K562 (cell line): ENCODE measurements at regions of chr3 and their contacts with region 1.

Region 1: GRCh38 chr3:155854141-155854940 is at the start of gene SLC33A1:
- DNase-seq: peak; percentile 97 to 100 (median 98)
- ATAC-seq: peak; percentile 93
- H3K4me3 ChIP-seq: peak within 1 kb of the TSS; percentile 93
- H3K27ac ChIP-seq: peak within 1 kb of the TSS; percentile 98
- H3K4me1 ChIP-seq: peaks cover 3 to 15% of the 10 kb centered on the region in 2 experiments; a peak in 3 of 5 replicates
- H3K27me3 ChIP-seq: no peaks in the 10 kb centered on the region
- CTCF ChIP-seq: peak in 2 of 3 experiments; percentile 2 to 4; a peak in 1 of 6 replicates
- EP300 ChIP-seq: peak; percentile 61
- POLR2A ChIP-seq: peak; percentile 95
- RAD21 ChIP-seq: no peak
- polyA plus RNA-seq, gene SLC33A1: 6.2 to 7.8 TPM

Region 2: GRCh38 chr3:154862265-154862664 is 992.1 kb before region 1 on chr3:
- CTCF ChIA-PET with region 1: no interaction called
- POLR2A ChIA-PET with region 1: no interaction called
- in situ Hi-C with region 1: no loop called
- intact Hi-C with region 1: no loop called
- DNase-seq: no peak
- ATAC-seq: no peak
- H3K4me3 ChIP-seq: no peak overlapping the region
- H3K27ac ChIP-seq: no peak overlapping the region
- H3K4me1 ChIP-seq: no peaks in the 10 kb centered on the region
- H3K27me3 ChIP-seq: no peaks in the 10 kb centered on the region
- CTCF ChIP-seq: no peak
- EP300 ChIP-seq: no peak
- POLR2A ChIP-seq: no peak
- RAD21 ChIP-seq: no peak

Region 3: GRCh38 chr3:155382396-155383042 is 471.8 kb before region 1 on chr3:
- CTCF ChIA-PET with region 1: no interaction called
- POLR2A ChIA-PET with region 1: no interaction called
- in situ Hi-C with region 1: no loop called
- intact Hi-C with region 1: loop called (anchors 10 kb)
- DNase-seq: peak; percentile 64 to 85 (median 70)
- ATAC-seq: peak; percentile 99
- H3K4me3 ChIP-seq: no peak overlapping the region
- H3K27ac ChIP-seq: no peak overlapping the region
- H3K4me1 ChIP-seq: no peaks in the 10 kb centered on the region
- H3K27me3 ChIP-seq: peaks cover under 1 to 7% of the 10 kb centered on the region in 2 experiments; a peak in 3 of 5 replicates
- CTCF ChIP-seq: peak; percentile 79 to 89 (median 83)
- EP300 ChIP-seq: no peak
- POLR2A ChIP-seq: no peak
- RAD21 ChIP-seq: peak; percentile 94 to 95

Region 4: DNA sequence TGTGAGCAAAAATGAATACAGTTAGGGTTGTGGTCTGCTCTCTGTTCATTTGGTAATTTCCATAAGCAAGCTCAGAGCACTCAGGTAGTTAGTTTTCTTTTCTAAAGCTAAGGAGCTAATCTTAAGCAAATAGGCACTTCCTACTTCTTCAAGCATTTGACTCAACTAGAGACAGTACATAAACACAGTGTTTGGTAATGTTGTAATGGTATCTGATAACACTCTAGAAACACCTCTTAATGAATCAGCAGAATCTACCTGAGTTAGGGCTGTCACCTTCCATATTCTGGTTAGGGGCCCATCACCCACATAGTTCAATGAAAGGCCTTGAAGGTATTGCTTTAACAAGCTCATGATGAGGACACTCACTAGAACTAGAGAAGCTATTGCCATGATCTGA is 192.6 kb before region 1 on chr3:
- CTCF ChIA-PET with region 1: no interaction called
- POLR2A ChIA-PET with region 1: no interaction called
- in situ Hi-C with region 1: no loop called
- intact Hi-C with region 1: no loop called
- DNase-seq: no peak
- ATAC-seq: no peak
- H3K4me3 ChIP-seq: no peak overlapping the region
- H3K27ac ChIP-seq: no peak overlapping the region
- H3K4me1 ChIP-seq: peaks cover 0 to 2% of the 10 kb centered on the region in 2 experiments; a peak in 1 of 5 replicates
- H3K27me3 ChIP-seq: peaks cover 0 to 5% of the 10 kb centered on the region in 2 experiments; a peak in 1 of 5 replicates
- CTCF ChIP-seq: no peak
- EP300 ChIP-seq: no peak
- POLR2A ChIP-seq: no peak
- RAD21 ChIP-seq: no peak

Region 5: GRCh38 chr3:155712008-155712407 is 142.3 kb before region 1 on chr3:
- CTCF ChIA-PET with region 1: no interaction called
- POLR2A ChIA-PET with region 1: no interaction called
- in situ Hi-C with region 1: no loop called
- intact Hi-C with region 1: no loop called
- DNase-seq: no peak
- ATAC-seq: no peak
- H3K4me3 ChIP-seq: no peak overlapping the region
- H3K27ac ChIP-seq: no peak overlapping the region
- H3K4me1 ChIP-seq: no peaks in the 10 kb centered on the region
- H3K27me3 ChIP-seq: no peaks in the 10 kb centered on the region
- CTCF ChIP-seq: no peak
- EP300 ChIP-seq: no peak
- POLR2A ChIP-seq: no peak
- RAD21 ChIP-seq: no peak

Region 6: DNA sequence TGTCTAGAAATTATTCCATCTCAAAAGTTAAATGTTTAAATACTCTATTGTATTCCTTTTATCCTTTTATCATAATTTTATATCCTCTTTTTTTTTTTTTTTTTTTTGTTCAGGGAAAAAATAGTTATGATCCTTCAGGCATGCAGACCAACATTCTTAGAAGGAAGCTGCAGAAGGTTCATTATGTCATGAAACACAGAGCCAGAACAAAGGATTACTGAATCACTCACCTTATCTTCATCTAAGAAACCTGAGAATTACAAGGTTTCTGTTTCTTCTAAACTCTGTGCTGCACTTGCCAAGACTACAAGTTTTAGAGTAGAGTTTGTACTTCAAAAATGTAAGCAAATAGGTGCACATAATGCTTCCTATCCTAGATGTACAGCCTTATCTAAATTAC is 112.7 kb before region 1 on chr3:
- CTCF ChIA-PET with region 1: no interaction called
- POLR2A ChIA-PET with region 1: no interaction called
- in situ Hi-C with region 1: no loop called
- intact Hi-C with region 1: no loop called
- DNase-seq: no peak
- ATAC-seq: no peak
- H3K4me3 ChIP-seq: no peak overlapping the region
- H3K27ac ChIP-seq: no peak overlapping the region
- H3K4me1 ChIP-seq: peaks cover 6 to 25% of the 10 kb centered on the region in 2 experiments; a peak in 4 of 5 replicates
- H3K27me3 ChIP-seq: no peaks in the 10 kb centered on the region
- CTCF ChIP-seq: no peak
- EP300 ChIP-seq: no peak
- POLR2A ChIP-seq: no peak
- RAD21 ChIP-seq: no peak

Region 7: GRCh38 chr3:155843569-155843968 is 10.8 kb before region 1 on chr3:
- CTCF ChIA-PET with region 1: interaction called, 3 read pairs
- POLR2A ChIA-PET with region 1: interaction called, 14 read pairs
- in situ Hi-C with region 1: no loop called
- intact Hi-C with region 1: no loop called
- DNase-seq: no peak
- ATAC-seq: 0 out of 3 replicates have a peak, but pooled peaks have one; percentile 6
- H3K4me3 ChIP-seq: no peak overlapping the region
- H3K27ac ChIP-seq: no peak overlapping the region
- H3K4me1 ChIP-seq: peaks cover 5 to 9% of the 10 kb centered on the region in 2 experiments; a peak in 3 of 5 replicates
- H3K27me3 ChIP-seq: no peaks in the 10 kb centered on the region
- CTCF ChIP-seq: no peak
- EP300 ChIP-seq: no peak
- POLR2A ChIP-seq: no peak
- RAD21 ChIP-seq: no peak